Activated CD8-positive, alpha-beta memory T cell treated with anti-CD3 and anti-CD28 coated beads, Interleukin-2, amount 10 ng/mL, durations not matched to agents 7 days and 5 days (primary cell): ENCODE measurements at regions of chr10 and their contacts with region 1.

Region 1: GRCh38 chr10:103911021-103911459 is 6.9 kb downstream of the STN1 start:
- DNase-seq: peak; percentile 80
- ATAC-seq: peak; percentile 58
- H3K4me3 Mint-ChIP-seq: peak overlapping the region; percentile 68
- H3K27ac Mint-ChIP-seq: peak overlapping the region; percentile 98
- H3K4me1 Mint-ChIP-seq: peaks cover 74% of the 10 kb centered on the region
- H3K27me3 Mint-ChIP-seq: no peaks in the 10 kb centered on the region

Region 2: GRCh38 chr10:103895411-103896186 is 15.4 kb before region 1 on chr10:
- CTCF ChIA-PET with region 1: interaction called, 17 read pairs
- DNase-seq: no peak
- ATAC-seq: peak; percentile 72
- H3K4me3 Mint-ChIP-seq: no peak overlapping the region
- H3K27ac Mint-ChIP-seq: peak overlapping the region; percentile 75
- H3K4me1 Mint-ChIP-seq: peaks cover 47% of the 10 kb centered on the region
- H3K27me3 Mint-ChIP-seq: no peaks in the 10 kb centered on the region